ENCODE measurements at regions of chr17 and their contacts with region 1.

Region 1: DNA sequence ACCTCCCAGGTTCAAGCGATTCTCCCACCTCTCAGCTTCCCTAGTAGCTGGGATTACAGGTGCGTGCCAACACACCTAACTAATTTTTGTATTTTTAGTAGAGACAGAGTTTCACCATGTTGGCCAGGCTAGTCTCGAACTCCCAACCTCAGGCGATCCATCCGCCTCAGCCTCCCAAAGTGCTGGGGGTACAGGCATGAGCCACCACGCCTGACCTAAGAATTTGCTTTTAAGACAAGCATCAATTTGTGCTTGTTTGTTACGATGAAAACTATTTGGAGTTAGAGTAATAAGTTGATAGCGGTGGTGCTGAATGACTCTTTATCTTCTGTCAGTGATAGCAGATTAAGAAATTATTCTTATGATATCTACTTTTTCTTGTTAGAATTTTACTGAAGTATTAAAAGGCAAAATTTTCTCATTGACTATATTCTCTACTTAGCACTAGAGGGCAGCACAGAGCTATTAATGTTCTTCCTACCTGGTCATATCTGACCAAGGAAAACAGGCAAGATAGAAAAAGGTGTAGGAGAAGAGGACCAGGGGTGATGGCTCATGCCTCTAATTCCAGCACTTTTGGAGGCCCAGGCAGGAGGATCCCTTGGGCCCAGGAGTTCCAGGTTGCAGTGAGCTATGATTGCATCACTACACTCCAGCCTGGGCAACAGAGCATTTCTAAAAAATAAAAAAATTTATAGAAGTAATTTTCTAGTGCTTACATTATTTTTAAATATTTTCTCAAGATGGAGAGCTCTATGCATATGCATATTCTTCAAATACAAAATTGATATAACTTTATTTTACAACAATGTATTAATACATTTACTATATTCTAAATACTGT is 24.5 kb downstream of the STXBP4 start:
- DNase-seq: peak; percentile 15 to 45 (median 35)
- H3K4me3 ChIP-seq: no peak overlapping the region
- H3K4me3 Mint-ChIP-seq: no peak overlapping the region
- H3K27ac ChIP-seq: no peak overlapping the region
- H3K27ac Mint-ChIP-seq: peak overlapping the region in 1 of 7 donors; percentile 12
- H3K4me1 ChIP-seq: no peaks in the 10 kb centered on the region
- H3K4me1 Mint-ChIP-seq: no peaks in the 10 kb centered on the region
- H3K27me3 ChIP-seq: no peaks in the 10 kb centered on the region
- H3K27me3 Mint-ChIP-seq: no peaks in the 10 kb centered on the region
- CTCF ChIP-seq: peak; percentile 85

Region 2: DNA sequence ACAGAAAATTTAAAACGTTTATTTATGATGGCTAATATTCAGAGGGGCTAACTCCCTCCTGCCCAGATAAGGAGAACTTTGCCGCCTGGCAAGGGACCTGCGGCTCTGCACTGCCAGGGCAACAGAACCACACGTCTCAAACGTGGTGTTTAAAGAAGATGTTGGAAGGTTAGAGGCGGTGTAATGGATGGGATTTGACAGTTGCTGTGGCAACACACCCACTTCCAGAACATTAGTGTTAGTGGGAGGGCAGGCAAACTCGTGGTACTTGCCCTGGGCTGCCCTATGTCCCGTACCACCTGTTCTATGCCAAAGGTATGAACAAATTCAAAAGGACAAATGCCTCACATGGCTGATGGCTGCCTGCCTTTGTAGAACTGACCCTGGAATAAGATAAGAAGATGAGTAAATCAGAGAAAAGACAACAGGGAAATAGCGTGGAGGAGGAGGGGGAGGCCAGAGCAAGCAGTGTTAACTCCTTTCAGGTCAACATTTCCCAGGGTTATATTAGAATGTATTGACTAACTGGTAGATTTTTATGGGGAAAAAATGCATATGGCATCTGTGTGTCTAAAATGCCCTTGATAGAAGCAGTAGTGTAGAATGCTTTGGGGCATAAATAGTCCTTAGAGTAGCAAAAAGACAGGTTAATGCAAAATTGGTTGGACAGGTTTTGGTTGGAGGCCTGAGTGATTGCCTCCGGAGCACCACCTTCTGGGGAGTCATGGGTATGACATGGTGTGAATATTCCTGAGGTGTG is 302.6 kb after region 1 on chr17:
- intact Hi-C with region 1: loop called (anchors 2 kb)
- DNase-seq: peak; percentile 17 to 32 (median 31)
- H3K4me3 ChIP-seq: no peak overlapping the region
- H3K4me3 Mint-ChIP-seq: no peak overlapping the region
- H3K27ac ChIP-seq: no peak overlapping the region
- H3K27ac Mint-ChIP-seq: no peak overlapping the region
- H3K4me1 ChIP-seq: peaks cover 6 to 10% of the 10 kb centered on the region in 2 donors
- H3K4me1 Mint-ChIP-seq: peaks cover 13% of the 10 kb centered on the region
- H3K27me3 ChIP-seq: no peaks in the 10 kb centered on the region
- H3K27me3 Mint-ChIP-seq: peaks cover 0 to 4% (median 2%) of the 10 kb centered on the region in 3 donors
- CTCF ChIP-seq: peak; percentile 92

Region 3: GRCh38 chr17:55348749-55349354 is 355.8 kb after region 1 on chr17:
- intact Hi-C with region 1: loop called (anchors 5 kb)
- DNase-seq: peak; percentile 8 to 30 (median 25)
- H3K4me3 ChIP-seq: no peak overlapping the region
- H3K4me3 Mint-ChIP-seq: no peak overlapping the region
- H3K27ac ChIP-seq: no peak overlapping the region
- H3K27ac Mint-ChIP-seq: no peak overlapping the region
- H3K4me1 ChIP-seq: no peaks in the 10 kb centered on the region
- H3K4me1 Mint-ChIP-seq: peaks cover 3% of the 10 kb centered on the region
- H3K27me3 ChIP-seq: no peaks in the 10 kb centered on the region
- H3K27me3 Mint-ChIP-seq: peaks cover 0 to 14% (median 8%) of the 10 kb centered on the region in 3 donors
- CTCF ChIP-seq: peak; percentile 89